B cell (primary cell): ENCODE measurements at regions of chr6 and their contacts with region 1.

Region 1: GRCh38 chr6:90375681-90376439 is 79.2 kb upstream of the BACH2 start:
- DNase-seq: peak; percentile 95
- ATAC-seq: peak; percentile 95
- H3K4me3 ChIP-seq: peak overlapping the region in 4 of 5 experiments; percentile 16 to 48 (median 29)
- H3K4me3 Mint-ChIP-seq: peak overlapping the region; percentile 79
- H3K27ac ChIP-seq: peak overlapping the region; percentile 94 to 98
- H3K27ac Mint-ChIP-seq: peak overlapping the region; percentile 96
- H3K4me1 ChIP-seq: peaks cover 39 to 45% of the 10 kb centered on the region in 2 donors
- H3K4me1 Mint-ChIP-seq: peaks cover 64% of the 10 kb centered on the region
- H3K27me3 ChIP-seq: no peaks in the 10 kb centered on the region
- H3K27me3 Mint-ChIP-seq: no peaks in the 10 kb centered on the region
- CTCF ChIP-seq: no peak

Region 2: GRCh38 chr6:90121982-90122381 is 253.9 kb before region 1 on chr6:
- CTCF ChIA-PET with region 1: no interaction called
- POLR2A ChIA-PET with region 1: no interaction called
- intact Hi-C with region 1: no loop called
- DNase-seq: peak; percentile 44
- ATAC-seq: peak; percentile 81
- H3K4me3 ChIP-seq: no peak overlapping the region
- H3K4me3 Mint-ChIP-seq: peak overlapping the region; percentile 37
- H3K27ac ChIP-seq: peak overlapping the region in 1 of 2 donors; percentile 72
- H3K27ac Mint-ChIP-seq: peak overlapping the region; percentile 77
- H3K4me1 ChIP-seq: peaks cover 47 to 51% of the 10 kb centered on the region in 2 donors
- H3K4me1 Mint-ChIP-seq: peaks cover 68% of the 10 kb centered on the region
- H3K27me3 ChIP-seq: no peaks in the 10 kb centered on the region
- H3K27me3 Mint-ChIP-seq: no peaks in the 10 kb centered on the region
- CTCF ChIP-seq: no peak

Region 3: GRCh38 chr6:90350689-90351554 is 24.9 kb before region 1 on chr6:
- CTCF ChIA-PET with region 1: interaction called, 4 read pairs
- POLR2A ChIA-PET with region 1: interaction called, 4 read pairs
- intact Hi-C with region 1: loop called (anchors 1 kb)
- DNase-seq: peak; percentile 92
- ATAC-seq: peak; percentile 96
- H3K4me3 ChIP-seq: peak overlapping the region in 2 of 5 experiments; percentile 5 to 38
- H3K4me3 Mint-ChIP-seq: peak overlapping the region; percentile 54
- H3K27ac ChIP-seq: peak overlapping the region; percentile 83 to 95
- H3K27ac Mint-ChIP-seq: peak overlapping the region; percentile 86
- H3K4me1 ChIP-seq: peaks cover 27% of the 10 kb centered on the region in 2 donors
- H3K4me1 Mint-ChIP-seq: peaks cover 36% of the 10 kb centered on the region
- H3K27me3 ChIP-seq: no peaks in the 10 kb centered on the region
- H3K27me3 Mint-ChIP-seq: no peaks in the 10 kb centered on the region
- CTCF ChIP-seq: no peak